Astrocyte of the cerebellum (primary cell): ENCODE measurements at regions of chr1 and their contacts with region 1.

Region 1: DNA sequence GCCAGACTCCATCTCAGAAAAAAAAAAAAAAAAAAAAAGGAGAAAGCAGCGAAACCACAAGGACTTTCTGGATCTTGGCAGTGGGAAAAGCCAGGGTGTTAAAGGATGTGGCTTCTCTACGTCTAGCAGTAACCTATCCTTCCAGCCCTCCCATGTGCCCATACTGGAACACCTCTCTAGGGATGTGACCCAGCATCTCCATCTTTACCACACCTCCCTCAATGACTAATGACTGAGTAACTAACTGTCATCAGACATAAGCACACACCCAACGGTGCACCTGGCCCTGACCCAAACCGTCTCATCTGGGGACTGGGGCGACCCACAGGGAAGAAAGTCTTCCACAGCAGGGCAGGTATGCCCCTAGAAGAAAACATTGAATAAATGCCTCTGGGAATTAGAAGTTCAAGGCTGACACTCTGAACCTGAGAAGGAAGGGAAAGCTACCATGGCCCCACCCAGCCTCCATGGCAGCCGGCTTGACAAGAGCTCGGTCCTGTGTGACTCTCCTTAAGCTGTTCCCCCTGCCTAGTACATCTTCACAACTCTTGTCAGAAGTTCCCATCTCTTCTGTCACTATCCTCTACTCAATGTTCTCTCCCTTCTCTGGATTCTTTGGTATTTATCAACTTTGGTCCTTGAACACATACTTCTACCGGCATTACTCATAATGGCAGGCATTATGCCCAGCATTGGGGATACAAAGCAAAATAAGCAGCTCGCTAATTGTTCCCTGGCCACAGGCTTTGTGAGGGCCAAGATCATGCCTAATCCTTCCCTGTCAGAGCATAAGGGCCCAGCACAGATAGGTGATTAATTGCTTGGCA is 14.8 kb upstream of the PAQR6 start:
- DNase-seq: peak; percentile 83
- H3K4me3 ChIP-seq: no peak overlapping the region
- CTCF ChIP-seq: no peak

Region 2: GRCh38 chr1:156204686-156205085 is 58.0 kb before region 1 on chr1:
- in situ Hi-C with region 1: no loop called
- DNase-seq: no peak
- H3K4me3 ChIP-seq: no peak overlapping the region
- CTCF ChIP-seq: no peak

Region 3: DNA sequence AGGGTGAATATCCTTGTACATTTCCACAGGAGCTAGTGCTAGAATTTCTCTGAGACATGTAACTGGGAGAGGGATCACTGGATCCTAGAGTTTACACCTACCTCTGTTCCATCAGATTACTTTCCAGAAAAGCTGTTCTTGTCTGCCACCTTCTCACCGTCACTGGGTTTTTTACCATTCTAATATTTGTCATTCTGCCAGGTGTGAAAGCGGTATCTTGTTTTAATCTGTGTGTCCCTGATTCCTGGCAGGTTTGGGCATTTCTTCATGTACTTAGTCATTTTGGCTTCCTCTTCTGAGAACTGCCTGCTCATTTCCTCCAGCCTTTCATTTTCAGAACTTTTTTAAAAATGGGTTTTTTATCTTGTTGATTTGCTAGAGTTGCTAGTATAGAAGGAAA is 44.8 kb before region 1 on chr1:
- in situ Hi-C with region 1: no loop called
- DNase-seq: no peak
- H3K4me3 ChIP-seq: no peak overlapping the region
- CTCF ChIP-seq: no peak

Region 4: GRCh38 chr1:156310962-156311361 is 48.3 kb after region 1 on chr1:
- in situ Hi-C with region 1: loop called (anchors 5 kb)
- DNase-seq: no peak
- H3K4me3 ChIP-seq: no peak overlapping the region
- CTCF ChIP-seq: no peak

Region 5: GRCh38 chr1:156336242-156336641 is 73.6 kb after region 1 on chr1:
- in situ Hi-C with region 1: no loop called
- DNase-seq: no peak
- H3K4me3 ChIP-seq: peak overlapping the region; percentile 96
- CTCF ChIP-seq: peak; percentile 22